Dorsolateral prefrontal cortex (tissue), 120 donors: ENCODE measurements at regions of chr6 and their contacts with region 1.

Region 1: GRCh38 chr6:39760226-39760952 is 31.8 kb upstream of the DAAM2 start:
- DNase-seq: no peak
- H3K4me3 ChIP-seq: no peak overlapping the region
- H3K27ac ChIP-seq: no peak overlapping the region
- H3K27me3 ChIP-seq: no peaks in the 10 kb centered on the region
- CTCF ChIP-seq: no peak

Region 2: DNA sequence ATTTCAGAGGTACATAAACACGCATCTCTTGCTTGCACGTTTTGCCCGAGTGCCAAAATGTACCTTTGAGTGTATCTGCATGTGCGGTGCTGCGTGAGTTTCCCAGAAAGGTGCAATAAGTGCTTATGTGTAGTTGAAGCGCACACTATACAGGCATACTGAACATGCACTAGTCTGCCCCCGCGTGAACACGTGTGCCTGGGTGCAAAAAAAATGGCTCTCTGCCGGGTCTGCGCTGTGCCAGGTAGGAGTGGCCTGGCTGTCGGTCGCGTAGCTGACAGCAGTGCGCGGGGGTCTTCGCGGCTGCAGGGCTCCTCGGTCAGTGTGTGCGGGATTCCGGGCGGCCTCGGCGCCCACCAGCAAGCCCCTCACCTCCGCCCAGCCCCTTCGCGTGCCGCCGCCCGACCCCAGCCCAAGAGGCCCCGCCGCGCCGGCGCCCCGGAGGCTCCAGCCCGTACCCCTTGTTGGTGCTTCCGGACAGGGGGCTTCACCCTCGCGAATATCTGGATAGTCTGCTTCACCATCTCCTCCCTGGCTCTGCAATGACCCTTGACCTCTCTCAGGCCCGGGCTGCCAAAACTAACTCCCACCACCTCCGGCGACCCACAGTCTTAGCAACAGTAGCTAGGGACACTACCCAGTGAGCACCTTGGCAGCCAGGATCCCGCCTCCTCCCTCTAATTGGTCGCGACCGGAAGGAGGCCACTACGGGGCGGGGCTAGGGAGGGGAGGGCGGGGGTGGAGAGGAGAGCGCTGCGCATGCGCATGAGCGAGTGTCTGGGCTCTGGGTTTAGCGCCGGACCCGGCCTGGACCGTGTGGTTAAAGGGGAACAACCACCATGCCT is 35.4 kb before region 1 on chr6 and contains the start of gene KIF6:
- intact Hi-C with region 1: loop called (anchors 5 kb)
- DNase-seq: peak; percentile 87 to 96 (median 94)
- H3K4me3 ChIP-seq: peak within 1 kb of the TSS; percentile 54 to 98 (median 85)
- H3K27ac ChIP-seq: peak within 1 kb of the TSS; percentile 49 to 99 (median 94)
- H3K27me3 ChIP-seq: no peaks in the 10 kb centered on the region
- CTCF ChIP-seq: peak in 31 of 56 donors; percentile 5 to 71 (median 36)
- total RNA-seq, gene KIF6: 3.2 to 34.6 (median 11.4) TPM